IMR-90 (cell line): ENCODE measurements at regions of chr9 and their contacts with region 1.

Region 1: GRCh38 chr9:73093740-73094379 is 57.8 kb upstream of the ANXA1 start:
- DNase-seq: peak; percentile 1
- ATAC-seq: 0 out of 2 replicates have a peak, but pooled peaks have one; percentile 35
- H3K4me3 ChIP-seq: peak overlapping the region; percentile 7; the same call in 1 of the 2 replicates
- H3K27ac ChIP-seq: no peak overlapping the region
- H3K4me1 ChIP-seq: no peaks in the 10 kb centered on the region
- H3K27me3 ChIP-seq: peaks cover 4% of the 10 kb centered on the region; the same call in 1 of the 2 replicates
- CTCF ChIP-seq: no peak
- POLR2A ChIP-seq: no peak
- RAD21 ChIP-seq: no peak

Region 2: GRCh38 chr9:72894342-72894741 is 199.5 kb before region 1 on chr9:
- CTCF ChIA-PET with region 1: no interaction called
- POLR2A ChIA-PET with region 1: no interaction called
- dilution Hi-C with region 1: no loop called
- in situ Hi-C with region 1: no loop called
- intact Hi-C with region 1: no loop called
- DNase-seq: peak; percentile 4
- ATAC-seq: no peak
- H3K4me3 ChIP-seq: no peak overlapping the region
- H3K27ac ChIP-seq: no peak overlapping the region
- H3K4me1 ChIP-seq: no peaks in the 10 kb centered on the region
- H3K27me3 ChIP-seq: no peaks in the 10 kb centered on the region
- CTCF ChIP-seq: no peak
- POLR2A ChIP-seq: no peak
- RAD21 ChIP-seq: no peak

Region 3: DNA sequence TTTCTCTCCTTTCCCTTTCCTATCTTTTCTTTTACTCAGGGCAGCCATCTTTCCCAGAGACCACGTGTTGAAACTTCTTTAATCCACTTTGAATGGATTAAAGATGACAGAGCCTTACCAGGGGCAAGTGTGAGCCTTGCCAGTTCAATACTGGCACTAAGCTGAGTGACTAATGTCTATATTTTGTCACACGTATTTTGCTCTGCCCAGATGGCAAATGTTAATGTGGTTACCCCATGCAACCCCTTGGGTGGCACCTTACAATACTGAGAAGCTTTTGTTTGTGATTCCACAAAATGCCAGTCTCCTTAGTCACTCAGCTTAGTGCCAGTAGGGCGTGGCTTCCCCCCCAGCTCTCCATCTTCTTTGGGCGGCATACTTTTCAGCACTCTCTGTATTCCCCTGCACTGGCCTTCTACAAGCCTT is 82.6 kb after region 1 on chr9:
- CTCF ChIA-PET with region 1: no interaction called
- POLR2A ChIA-PET with region 1: no interaction called
- dilution Hi-C with region 1: no loop called
- in situ Hi-C with region 1: no loop called
- intact Hi-C with region 1: no loop called
- DNase-seq: no peak
- ATAC-seq: peak; percentile 55
- H3K4me3 ChIP-seq: no peak overlapping the region
- H3K27ac ChIP-seq: no peak overlapping the region
- H3K4me1 ChIP-seq: 0 out of 2 replicates have a peak, but pooled peaks cover 1% of the 10 kb centered on the region
- H3K27me3 ChIP-seq: no peaks in the 10 kb centered on the region
- CTCF ChIP-seq: no peak
- POLR2A ChIP-seq: no peak
- RAD21 ChIP-seq: no peak

Region 4: DNA sequence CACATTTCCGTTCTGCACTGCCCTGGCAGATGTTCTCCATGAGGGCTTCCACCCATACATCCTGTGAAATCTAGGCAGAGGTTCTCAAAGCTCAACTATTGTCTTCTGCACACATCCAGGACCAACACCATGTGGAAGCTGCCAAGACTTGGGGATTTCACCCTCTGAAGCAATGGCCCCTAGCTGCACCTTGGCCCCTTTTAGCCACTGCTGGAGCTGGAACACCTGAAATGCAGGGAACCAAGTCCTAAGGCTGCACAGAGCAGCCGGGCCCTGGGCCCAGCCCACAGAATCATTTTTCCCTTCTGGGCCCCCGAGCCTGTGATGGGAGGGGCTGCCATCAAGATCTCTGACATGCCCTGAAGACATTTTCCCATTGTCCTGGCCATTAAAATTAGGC is 286.6 kb after region 1 on chr9:
- CTCF ChIA-PET with region 1: no interaction called
- POLR2A ChIA-PET with region 1: no interaction called
- dilution Hi-C with region 1: no loop called
- in situ Hi-C with region 1: no loop called
- intact Hi-C with region 1: loop called (anchors 5 kb)
- DNase-seq: no peak
- ATAC-seq: no peak
- H3K4me3 ChIP-seq: no peak overlapping the region
- H3K27ac ChIP-seq: no peak overlapping the region
- H3K4me1 ChIP-seq: no peaks in the 10 kb centered on the region
- H3K27me3 ChIP-seq: no peaks in the 10 kb centered on the region
- CTCF ChIP-seq: no peak
- POLR2A ChIP-seq: no peak
- RAD21 ChIP-seq: no peak

Region 5: DNA sequence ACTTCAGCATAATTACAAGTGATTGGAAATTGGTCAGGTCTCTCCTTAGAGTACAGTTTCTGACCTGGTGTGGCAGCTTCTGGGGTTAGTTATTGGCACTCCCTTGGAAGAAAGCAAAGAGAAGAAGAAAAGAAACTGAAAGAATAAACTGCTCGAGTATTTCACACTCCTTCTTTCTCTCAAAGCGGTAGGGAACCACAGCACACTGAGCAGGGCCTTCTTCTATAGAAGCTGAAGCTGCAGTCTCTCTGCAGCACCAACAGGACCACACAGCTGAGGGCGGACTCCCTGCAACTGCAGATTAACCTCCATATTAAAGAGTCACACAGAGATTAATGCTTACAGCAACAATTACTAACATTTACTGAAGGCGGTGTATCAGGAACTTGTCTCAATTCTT is 1641.9 kb after region 1 on chr9:
- CTCF ChIA-PET with region 1: no interaction called
- POLR2A ChIA-PET with region 1: no interaction called
- dilution Hi-C with region 1: no loop called
- in situ Hi-C with region 1: no loop called
- intact Hi-C with region 1: loop called (anchors 10 kb)
- DNase-seq: no peak
- ATAC-seq: no peak
- H3K4me3 ChIP-seq: no peak overlapping the region
- H3K27ac ChIP-seq: no peak overlapping the region
- H3K4me1 ChIP-seq: no peaks in the 10 kb centered on the region
- H3K27me3 ChIP-seq: no peaks in the 10 kb centered on the region; the same call in 1 of the 2 replicates
- CTCF ChIP-seq: no peak
- POLR2A ChIP-seq: no peak
- RAD21 ChIP-seq: no peak